ENCODE measurements at regions of chr9 and their contacts with region 1.

Region 1: GRCh38 chr9:127396808-127397497 is at the start of gene SLC2A8:
- DNase-seq: peak; percentile 98 to 99 (median 99)
- H3K4me3 ChIP-seq: peak within 1 kb of the TSS; percentile 69
- H3K27ac ChIP-seq: peak within 1 kb of the TSS; percentile 57 to 79
- H3K4me1 ChIP-seq: peaks cover 5% of the 10 kb centered on the region
- H3K27me3 ChIP-seq: no peaks in the 10 kb centered on the region
- CTCF ChIP-seq: peak in 2 of 3 donors; percentile 37 to 52
- EP300 ChIP-seq: no peak
- POLR2A ChIP-seq: peak; percentile 73
- total RNA-seq, gene SLC2A8: 9.4 to 21.2 (median 17.9) TPM

Region 2: DNA sequence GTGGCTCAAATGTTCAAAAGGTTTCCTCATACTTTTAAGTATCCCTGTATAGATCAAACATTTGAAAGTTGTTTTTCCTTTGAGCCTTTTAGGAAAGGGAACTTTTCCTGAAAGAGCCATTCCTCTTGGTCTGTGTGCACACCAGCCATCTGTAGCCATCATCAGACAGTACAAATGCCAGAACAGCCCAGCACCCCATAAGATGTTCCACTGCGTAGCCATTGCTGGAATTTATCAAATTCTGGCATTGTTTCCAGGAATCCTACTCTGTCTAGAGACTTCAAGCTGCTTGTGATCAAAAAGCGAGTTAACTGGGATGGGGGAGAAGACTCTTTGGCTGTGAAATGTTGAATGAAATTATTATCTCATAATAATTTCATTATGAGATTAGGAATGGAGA is 382.7 kb before region 1 on chr9:
- intact Hi-C with region 1: no loop called
- DNase-seq: no peak
- H3K4me3 ChIP-seq: no peak overlapping the region
- H3K27ac ChIP-seq: no peak overlapping the region
- H3K4me1 ChIP-seq: peaks cover 1% of the 10 kb centered on the region
- H3K27me3 ChIP-seq: no peaks in the 10 kb centered on the region
- CTCF ChIP-seq: no peak
- EP300 ChIP-seq: no peak
- POLR2A ChIP-seq: no peak

Region 3: DNA sequence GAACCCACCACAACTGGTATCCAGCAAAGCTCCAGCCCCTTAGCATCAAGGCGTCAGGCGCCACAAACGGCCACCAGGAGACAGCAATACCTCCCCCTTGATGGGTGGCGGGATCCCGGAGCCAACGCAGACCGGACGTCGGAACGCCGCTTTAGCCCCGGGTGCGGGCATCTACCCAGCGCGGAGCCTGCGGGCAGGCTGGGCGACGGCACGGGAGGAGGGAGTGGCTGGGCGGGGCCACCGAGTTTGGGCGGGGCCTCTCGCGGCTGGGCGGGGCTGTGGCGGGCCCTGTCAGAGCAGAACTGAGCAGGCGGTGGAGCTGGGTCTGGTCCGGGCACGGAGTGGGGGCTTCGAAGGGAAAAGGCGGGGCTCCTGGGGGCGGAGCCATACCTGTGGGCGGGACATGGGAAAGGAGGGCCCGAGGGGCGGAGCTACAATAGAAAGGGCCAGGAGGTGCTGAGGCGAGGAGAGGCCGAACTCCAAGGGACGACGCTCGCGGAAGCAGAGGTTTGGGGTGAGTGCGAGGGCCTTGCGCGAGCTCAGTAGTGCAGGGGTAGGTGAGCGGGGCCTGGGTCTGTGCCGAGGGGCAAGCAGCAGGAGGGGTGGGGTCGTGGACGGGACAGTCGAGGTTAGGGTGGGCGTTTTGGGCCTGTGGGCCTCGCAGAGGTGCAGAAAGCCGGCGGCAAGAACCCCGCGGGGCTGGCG is 172.6 kb before region 1 on chr9:
- intact Hi-C with region 1: loop called in 1 of 4 experiments (anchors 2 kb)
- DNase-seq: peak; percentile 97 to 99 (median 97)
- H3K4me3 ChIP-seq: peak overlapping the region; percentile 48
- H3K27ac ChIP-seq: peak overlapping the region; percentile 51 to 82
- H3K4me1 ChIP-seq: peaks cover 5% of the 10 kb centered on the region
- H3K27me3 ChIP-seq: no peaks in the 10 kb centered on the region
- CTCF ChIP-seq: no peak
- EP300 ChIP-seq: no peak
- POLR2A ChIP-seq: peak; percentile 30

Region 4: GRCh38 chr9:127444921-127445850 is 48.2 kb after region 1 on chr9:
- intact Hi-C with region 1: loop called in 1 of 4 experiments (anchors 10 kb)
- DNase-seq: no peak
- H3K4me3 ChIP-seq: no peak overlapping the region
- H3K27ac ChIP-seq: no peak overlapping the region
- H3K4me1 ChIP-seq: peaks cover 6% of the 10 kb centered on the region
- H3K27me3 ChIP-seq: no peaks in the 10 kb centered on the region
- CTCF ChIP-seq: no peak
- EP300 ChIP-seq: no peak
- POLR2A ChIP-seq: no peak

Measured in ovary (tissue), 10 donors.